Endothelial cell of umbilical vein (primary cell): ENCODE measurements at regions of chr22 and their contacts with region 1.

Region 1: GRCh38 chr22:27990879-27991278 is 71.8 kb upstream of the PITPNB start:
- DNase-seq: peak; percentile 48
- H3K4me3 ChIP-seq: no peak overlapping the region
- H3K27ac ChIP-seq: no peak overlapping the region
- H3K4me1 ChIP-seq: peaks cover 3% of the 10 kb centered on the region
- H3K27me3 ChIP-seq: no peaks in the 10 kb centered on the region
- CTCF ChIP-seq: peak; percentile 63 to 82
- POLR2A ChIP-seq: no peak

Region 2: DNA sequence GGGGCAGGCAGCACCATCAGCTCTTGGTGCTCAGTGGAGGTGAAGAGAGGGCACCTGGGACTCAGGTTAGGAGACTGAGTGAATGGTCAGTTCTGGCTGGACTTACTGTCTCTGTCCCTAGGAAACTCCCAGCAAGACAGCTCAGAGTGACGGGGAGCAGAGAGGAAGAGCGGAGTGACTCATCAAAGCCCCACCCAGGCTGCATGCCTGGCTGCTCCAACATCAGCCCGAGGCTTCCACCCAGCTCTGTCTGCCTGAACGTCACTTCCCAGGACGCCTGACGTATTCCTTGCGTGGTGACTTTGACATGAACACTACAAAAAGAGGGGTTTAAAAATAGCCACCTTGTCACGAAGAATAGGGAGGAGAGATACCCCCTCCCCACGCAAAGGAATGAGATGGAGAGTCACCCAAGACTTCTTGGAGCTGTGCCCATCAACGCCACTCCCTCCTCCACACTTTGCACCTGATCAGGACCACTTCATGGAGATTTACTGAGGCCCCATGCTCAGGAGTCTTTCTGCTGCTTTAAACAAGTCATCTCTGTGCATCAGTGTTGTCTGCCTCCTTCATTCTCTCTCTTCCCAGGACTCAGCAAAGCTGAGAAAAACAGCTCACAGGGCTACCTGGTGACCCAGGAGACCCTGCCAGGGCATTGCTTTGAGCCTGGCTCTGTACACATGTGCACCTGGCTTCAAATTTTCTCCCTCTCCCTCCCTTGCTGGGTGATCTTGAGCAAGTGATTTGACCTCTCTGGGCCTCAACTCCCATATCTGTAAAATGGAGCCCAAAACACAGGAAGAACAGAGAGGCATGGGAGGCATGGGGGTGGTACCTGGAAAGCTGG is 272.5 kb before region 1 on chr22:
- CTCF ChIA-PET with region 1: no interaction called
- POLR2A ChIA-PET with region 1: no interaction called
- dilution Hi-C with region 1: no loop called
- intact Hi-C with region 1: no loop called
- DNase-seq: peak; percentile 78
- H3K4me3 ChIP-seq: no peak overlapping the region
- H3K27ac ChIP-seq: peak overlapping the region; percentile 36
- H3K4me1 ChIP-seq: peaks cover 11% of the 10 kb centered on the region
- H3K27me3 ChIP-seq: no peaks in the 10 kb centered on the region
- CTCF ChIP-seq: no peak
- POLR2A ChIP-seq: no peak

Region 3: GRCh38 chr22:27919222-27919941 is 71.5 kb before region 1 on chr22 and contains the start of gene PITPNB:
- CTCF ChIA-PET with region 1: interaction called, 7 read pairs
- POLR2A ChIA-PET with region 1: no interaction called
- dilution Hi-C with region 1: no loop called
- intact Hi-C with region 1: loop called (anchors 1 kb)
- DNase-seq: peak; percentile 99
- H3K4me3 ChIP-seq: peak within 1 kb of the TSS; percentile 77 to 100 (median 88)
- H3K27ac ChIP-seq: peak within 1 kb of the TSS; percentile 98
- H3K4me1 ChIP-seq: peaks cover 41% of the 10 kb centered on the region
- H3K27me3 ChIP-seq: no peaks in the 10 kb centered on the region
- CTCF ChIP-seq: no peak
- POLR2A ChIP-seq: peak; percentile 88
- total RNA-seq, gene PITPNB: 108 and 109 TPM in 2 replicates

Region 4: GRCh38 chr22:28034760-28035401 is 44.0 kb after region 1 on chr22:
- CTCF ChIA-PET with region 1: no interaction called
- POLR2A ChIA-PET with region 1: no interaction called
- dilution Hi-C with region 1: no loop called
- intact Hi-C with region 1: no loop called
- DNase-seq: peak; percentile 86
- H3K4me3 ChIP-seq: no peak overlapping the region
- H3K27ac ChIP-seq: peak overlapping the region; percentile 0
- H3K4me1 ChIP-seq: peaks cover 41% of the 10 kb centered on the region
- H3K27me3 ChIP-seq: no peaks in the 10 kb centered on the region
- CTCF ChIP-seq: no peak
- POLR2A ChIP-seq: no peak

Region 5: GRCh38 chr22:28442264-28442710 is 451.4 kb after region 1 on chr22:
- CTCF ChIA-PET with region 1: no interaction called
- POLR2A ChIA-PET with region 1: no interaction called
- dilution Hi-C with region 1: no loop called
- intact Hi-C with region 1: no loop called
- DNase-seq: peak; percentile 59
- H3K4me3 ChIP-seq: peak overlapping the region; percentile 28 to 74 (median 46)
- H3K27ac ChIP-seq: no peak overlapping the region
- H3K4me1 ChIP-seq: peaks cover 25% of the 10 kb centered on the region
- H3K27me3 ChIP-seq: no peaks in the 10 kb centered on the region
- CTCF ChIP-seq: peak; percentile 62 to 78
- POLR2A ChIP-seq: no peak

Region 6: GRCh38 chr22:29062286-29062821 is 1071.5 kb after region 1 on chr22:
- CTCF ChIA-PET with region 1: no interaction called
- POLR2A ChIA-PET with region 1: interaction called, 14 read pairs
- dilution Hi-C with region 1: no loop called
- intact Hi-C with region 1: no loop called
- DNase-seq: no peak
- H3K4me3 ChIP-seq: no peak overlapping the region
- H3K27ac ChIP-seq: no peak overlapping the region
- H3K4me1 ChIP-seq: no peaks in the 10 kb centered on the region
- H3K27me3 ChIP-seq: peaks cover 3 to 10% of the 10 kb centered on the region in 2 experiments
- CTCF ChIP-seq: no peak
- POLR2A ChIP-seq: no peak